Activated CD4-positive, alpha-beta memory T cell treated with anti-CD3 and anti-CD28 coated beads for 36 hours (primary cell): ENCODE measurements at regions of chr11 and their contacts with region 1.

Region 1: DNA sequence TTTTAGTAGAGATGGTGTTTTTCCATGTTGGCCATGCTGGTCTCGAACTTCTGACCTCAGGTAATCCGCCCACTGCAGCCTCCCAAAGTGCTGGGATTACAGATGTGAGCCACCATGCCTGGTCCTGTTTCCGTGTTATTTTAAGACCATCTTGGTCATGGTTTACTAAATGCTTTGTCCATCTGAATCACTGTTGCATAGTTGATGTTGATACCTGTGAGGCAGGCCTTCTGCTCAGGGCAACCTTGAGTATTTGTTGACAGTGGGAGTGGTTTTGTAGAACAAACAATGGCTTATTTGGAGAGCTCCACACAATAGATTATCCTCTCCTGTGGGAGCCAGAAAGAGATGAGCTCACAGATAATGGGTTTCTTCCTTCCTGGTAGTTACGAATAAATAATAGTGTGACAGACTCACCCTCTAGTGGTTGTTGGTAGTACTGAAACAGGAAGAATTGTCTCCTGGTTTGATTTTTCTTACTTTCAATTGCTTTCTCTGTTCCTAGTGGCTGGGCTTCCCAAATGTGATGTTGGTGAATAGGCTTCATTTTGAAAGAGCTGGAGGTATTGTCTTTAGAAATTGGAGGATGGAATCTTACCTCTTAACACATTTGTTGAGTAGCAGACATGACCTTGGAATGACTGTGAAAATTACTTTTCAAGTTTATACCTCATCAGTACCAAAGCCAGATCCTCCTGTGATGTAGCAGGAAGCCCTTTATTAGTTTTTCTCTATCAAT is 39.0 kb downstream of the CTNND1 start:
- DNase-seq: no peak
- H3K4me3 Mint-ChIP-seq: no peak overlapping the region
- H3K27ac Mint-ChIP-seq: peak overlapping the region; percentile 19
- H3K4me1 Mint-ChIP-seq: peaks cover 23% of the 10 kb centered on the region
- H3K27me3 Mint-ChIP-seq: no peaks in the 10 kb centered on the region

Region 2: GRCh38 chr11:57335343-57336110 is 465.1 kb before region 1 on chr11 and contains the start of gene SSRP1:
- CTCF ChIA-PET with region 1: no interaction called
- POLR2A ChIA-PET with region 1: no interaction called
- intact Hi-C with region 1: loop called (anchors 5 kb)
- DNase-seq: peak; percentile 92
- H3K4me3 Mint-ChIP-seq: peak within 1 kb of the TSS; percentile 91
- H3K27ac Mint-ChIP-seq: peak within 1 kb of the TSS; percentile 98
- H3K4me1 Mint-ChIP-seq: peaks cover 47% of the 10 kb centered on the region
- H3K27me3 Mint-ChIP-seq: no peaks in the 10 kb centered on the region
- total RNA-seq, gene SSRP1: 256 to 262 TPM

Region 3: GRCh38 chr11:57567515-57568329 is 232.9 kb before region 1 on chr11 and contains the start of gene UBE2L6:
- CTCF ChIA-PET with region 1: interaction called, 23 read pairs
- POLR2A ChIA-PET with region 1: no interaction called
- intact Hi-C with region 1: loop called (anchors 1 kb)
- DNase-seq: peak; percentile 70
- H3K4me3 Mint-ChIP-seq: peak within 1 kb of the TSS; percentile 92
- H3K27ac Mint-ChIP-seq: peak within 1 kb of the TSS; percentile 98
- H3K4me1 Mint-ChIP-seq: peaks cover 31% of the 10 kb centered on the region
- H3K27me3 Mint-ChIP-seq: no peaks in the 10 kb centered on the region
- total RNA-seq, gene UBE2L6: 152 to 162 TPM

Region 4: DNA sequence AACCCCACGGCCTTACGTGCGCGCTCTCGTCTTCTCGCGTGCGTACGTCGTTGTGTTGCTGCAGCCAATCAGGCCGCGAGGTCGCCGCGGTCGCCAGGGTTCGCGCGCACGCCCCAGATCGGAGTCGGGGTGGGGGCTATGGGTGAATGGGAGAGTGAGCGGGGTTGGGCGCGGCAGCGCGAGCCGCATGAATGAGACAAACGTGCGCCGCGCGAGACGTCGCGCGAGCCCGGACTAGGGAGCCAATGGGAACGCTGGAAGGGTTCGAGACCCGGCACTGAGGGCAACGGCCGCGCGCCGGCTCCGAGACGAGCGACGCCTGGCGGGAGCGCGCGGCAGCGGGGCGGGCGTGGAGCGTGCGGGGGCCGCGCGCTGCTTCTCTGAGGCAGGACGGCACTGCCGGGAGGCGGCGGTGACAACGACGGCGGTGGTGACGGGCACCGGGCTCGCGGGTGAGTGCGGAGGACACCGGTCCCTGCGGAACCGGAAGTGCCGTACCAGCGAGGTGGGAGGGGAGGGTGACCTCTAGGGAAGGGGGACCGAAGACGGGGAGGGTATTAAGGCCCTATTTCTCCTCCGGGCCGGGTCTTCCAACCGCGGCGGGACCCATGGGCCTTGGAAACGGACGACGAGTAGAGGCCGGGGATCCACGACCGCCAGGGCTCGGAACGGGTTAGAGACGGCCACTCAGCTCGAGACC is 132.7 kb before region 1 on chr11 and contains the start of gene ZDHHC5:
- CTCF ChIA-PET with region 1: interaction called, 6 read pairs
- POLR2A ChIA-PET with region 1: no interaction called
- intact Hi-C with region 1: loop called (anchors 2 kb)
- DNase-seq: peak; percentile 100
- H3K4me3 Mint-ChIP-seq: peak within 1 kb of the TSS; percentile 83
- H3K27ac Mint-ChIP-seq: peak within 1 kb of the TSS; percentile 100
- H3K4me1 Mint-ChIP-seq: peaks cover 41% of the 10 kb centered on the region
- H3K27me3 Mint-ChIP-seq: no peaks in the 10 kb centered on the region
- total RNA-seq, gene ZDHHC5: 56.8 to 65.5 TPM

Region 5: DNA sequence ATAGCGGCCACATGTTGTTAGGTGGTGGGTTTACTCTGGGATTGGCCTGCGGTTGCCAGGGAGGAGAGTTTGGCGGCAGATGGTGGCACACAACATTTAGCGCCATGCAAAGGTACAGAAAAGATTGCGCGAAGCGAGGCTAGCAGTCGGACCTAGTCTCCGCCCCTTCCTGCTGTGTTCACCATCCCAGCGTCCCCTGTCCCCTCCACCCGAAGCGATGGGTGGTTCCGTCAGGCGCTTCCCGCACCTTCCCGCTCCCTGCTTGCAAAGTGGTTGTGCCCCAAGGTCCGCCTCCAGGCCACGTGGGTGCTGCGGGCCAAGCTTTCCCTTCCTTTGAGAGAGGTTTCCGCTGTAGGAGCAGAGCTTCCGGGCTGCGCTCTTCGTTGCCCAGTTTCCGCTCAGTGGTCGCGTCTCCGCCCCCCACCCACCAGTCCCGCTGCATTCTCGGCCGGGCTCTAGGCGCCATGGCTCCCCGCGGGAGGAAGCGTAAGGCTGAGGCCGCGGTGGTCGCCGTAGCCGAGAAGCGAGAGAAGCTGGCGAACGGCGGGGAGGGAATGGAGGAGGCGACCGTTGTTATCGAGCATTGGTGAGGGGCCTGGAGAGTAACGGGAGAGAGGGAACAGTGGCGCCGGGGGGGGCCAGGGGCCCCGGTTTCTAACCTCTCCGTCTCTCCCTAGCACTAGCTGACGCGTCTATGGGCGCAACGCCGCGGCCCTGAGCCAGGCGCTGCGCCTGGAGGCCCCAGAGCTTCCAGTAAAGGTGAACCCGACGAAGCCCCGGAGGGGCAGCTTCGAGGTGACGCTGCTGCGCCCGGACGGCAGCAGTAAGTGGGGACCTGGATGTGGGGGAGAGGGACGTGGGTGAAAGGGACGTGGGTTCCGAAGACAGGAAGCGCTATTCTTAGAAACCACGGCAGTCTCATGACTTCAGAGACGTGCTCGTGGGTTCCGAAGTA is 59.2 kb before region 1 on chr11 and contains the start of gene SELENOH:
- CTCF ChIA-PET with region 1: interaction called, 41 read pairs
- POLR2A ChIA-PET with region 1: interaction called, 9 read pairs
- intact Hi-C with region 1: loop called (anchors 1 kb)
- DNase-seq: peak; percentile 98
- H3K4me3 Mint-ChIP-seq: peak within 1 kb of the TSS; percentile 97
- H3K27ac Mint-ChIP-seq: peak within 1 kb of the TSS; percentile 99
- H3K4me1 Mint-ChIP-seq: peaks cover 40% of the 10 kb centered on the region
- H3K27me3 Mint-ChIP-seq: no peaks in the 10 kb centered on the region
- total RNA-seq, gene SELENOH: 235 to 252 TPM

Region 6: GRCh38 chr11:57781529-57781943 is 19.1 kb before region 1 on chr11:
- CTCF ChIA-PET with region 1: interaction called, 10 read pairs
- POLR2A ChIA-PET with region 1: no interaction called
- intact Hi-C with region 1: no loop called
- DNase-seq: no peak
- H3K4me3 Mint-ChIP-seq: no peak overlapping the region
- H3K27ac Mint-ChIP-seq: no peak overlapping the region
- H3K4me1 Mint-ChIP-seq: peaks cover 2% of the 10 kb centered on the region
- H3K27me3 Mint-ChIP-seq: no peaks in the 10 kb centered on the region

Region 7: DNA sequence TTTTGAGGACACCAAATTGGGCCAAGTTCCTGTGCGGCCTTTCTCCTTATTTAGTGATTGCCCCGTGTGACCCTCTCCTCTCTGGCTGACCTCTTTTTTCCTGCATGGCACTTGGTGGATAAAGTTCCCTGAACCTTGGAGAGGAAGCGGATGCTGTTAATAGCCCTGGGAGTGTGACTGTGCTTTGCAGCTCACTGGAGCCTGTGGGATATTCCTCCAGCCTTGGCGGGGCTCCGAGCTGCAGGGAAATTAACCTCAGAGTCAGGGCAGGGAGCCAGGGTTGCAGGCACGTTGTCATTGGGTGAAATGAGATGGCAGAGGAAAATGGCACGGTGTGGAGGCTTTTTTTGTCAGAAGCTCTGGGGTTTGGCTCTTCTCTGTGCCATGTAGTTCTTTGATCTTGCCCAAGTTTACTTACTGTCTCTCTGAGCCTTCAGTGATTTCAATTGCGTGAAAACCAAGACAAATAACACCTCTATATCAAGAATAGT is 224.0 kb after region 1 on chr11:
- CTCF ChIA-PET with region 1: no interaction called
- POLR2A ChIA-PET with region 1: no interaction called
- intact Hi-C with region 1: no loop called
- DNase-seq: no peak
- H3K4me3 Mint-ChIP-seq: no peak overlapping the region
- H3K27ac Mint-ChIP-seq: no peak overlapping the region
- H3K4me1 Mint-ChIP-seq: no peaks in the 10 kb centered on the region
- H3K27me3 Mint-ChIP-seq: no peaks in the 10 kb centered on the region